Ascending aorta (tissue), 2 donors: ENCODE measurements at regions of chr3 and their contacts with region 1.

Region 1: DNA sequence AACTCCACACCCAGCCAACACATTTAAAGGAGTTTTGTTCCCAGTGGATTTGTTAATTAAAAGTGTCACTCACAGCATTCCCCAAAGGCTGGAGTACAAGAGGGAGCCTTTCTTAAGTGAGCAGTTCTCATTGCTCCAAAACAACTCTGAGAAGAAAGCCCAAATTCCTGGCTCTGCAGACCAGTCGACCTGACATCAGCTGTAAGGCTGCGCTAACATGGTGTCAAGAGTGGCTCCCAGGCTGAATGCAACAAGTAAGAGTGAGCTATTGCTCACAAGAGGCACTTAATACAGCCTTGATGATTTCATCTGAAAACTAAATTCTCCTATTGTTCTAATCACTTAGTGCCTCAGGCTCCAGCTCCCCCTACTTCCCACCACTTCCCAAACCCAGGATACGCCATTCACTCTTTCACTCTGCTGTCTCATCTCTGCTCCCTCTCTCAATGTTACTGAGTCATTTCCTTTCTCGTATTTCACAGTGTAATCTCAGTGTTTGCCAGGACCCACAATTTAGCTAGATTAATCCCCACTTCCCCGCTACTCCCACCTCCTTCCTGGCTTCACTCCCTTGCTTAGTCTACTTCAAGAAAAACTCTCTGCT is 81.8 kb downstream of the WWTR1 start:
- DNase-seq: peak in 1 of 2 donors; percentile 84
- H3K4me3 ChIP-seq: peak overlapping the region in 1 of 2 donors; percentile 35
- H3K27ac ChIP-seq: peak overlapping the region; percentile 93 to 94
- H3K4me1 ChIP-seq: peaks cover 16 to 83% of the 10 kb centered on the region in 2 donors
- H3K27me3 ChIP-seq: no peaks in the 10 kb centered on the region
- CTCF ChIP-seq: no peak

Region 2: DNA sequence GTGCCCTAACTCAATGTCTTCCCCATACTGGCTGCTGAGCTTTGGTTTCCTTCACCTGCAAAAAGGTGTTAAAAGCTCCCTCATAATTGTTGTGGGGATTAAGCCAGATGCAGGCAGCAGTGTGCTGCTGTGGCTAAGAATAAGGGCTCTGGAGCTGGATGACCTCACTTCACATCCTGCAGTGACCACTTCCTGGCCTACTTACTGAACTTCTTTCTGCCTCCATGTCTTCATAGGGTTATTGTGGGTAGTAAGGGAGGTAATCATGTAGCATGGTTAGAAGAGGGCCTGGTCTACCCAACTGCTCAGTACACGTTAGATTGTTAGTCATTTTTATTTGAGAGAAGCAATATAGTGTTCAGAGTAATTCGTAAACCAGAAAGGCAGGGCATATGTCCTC is 566.3 kb before region 1 on chr3:
- intact Hi-C with region 1: loop called (anchors 5 kb)
- DNase-seq: no peak
- H3K4me3 ChIP-seq: no peak overlapping the region
- H3K27ac ChIP-seq: peak overlapping the region; percentile 59 to 90
- H3K4me1 ChIP-seq: peaks cover 6 to 22% of the 10 kb centered on the region in 2 donors
- H3K27me3 ChIP-seq: no peaks in the 10 kb centered on the region
- CTCF ChIP-seq: no peak

Region 3: GRCh38 chr3:149534671-149535332 is 41.3 kb before region 1 on chr3:
- intact Hi-C with region 1: loop called (anchors 5 kb)
- DNase-seq: no peak
- H3K4me3 ChIP-seq: no peak overlapping the region
- H3K27ac ChIP-seq: peak overlapping the region; percentile 66 to 82
- H3K4me1 ChIP-seq: peaks cover 0 to 62% of the 10 kb centered on the region in 2 donors
- H3K27me3 ChIP-seq: no peaks in the 10 kb centered on the region
- CTCF ChIP-seq: no peak

Region 4: GRCh38 chr3:149547938-149548668 is 28.0 kb before region 1 on chr3:
- intact Hi-C with region 1: loop called (anchors 2 kb)
- DNase-seq: peak in 1 of 2 donors; percentile 82
- H3K4me3 ChIP-seq: peak overlapping the region; percentile 8 to 39
- H3K27ac ChIP-seq: peak overlapping the region; percentile 89 to 92
- H3K4me1 ChIP-seq: peaks cover 6 to 27% of the 10 kb centered on the region in 2 donors
- H3K27me3 ChIP-seq: no peaks in the 10 kb centered on the region
- CTCF ChIP-seq: no peak

Region 5: DNA sequence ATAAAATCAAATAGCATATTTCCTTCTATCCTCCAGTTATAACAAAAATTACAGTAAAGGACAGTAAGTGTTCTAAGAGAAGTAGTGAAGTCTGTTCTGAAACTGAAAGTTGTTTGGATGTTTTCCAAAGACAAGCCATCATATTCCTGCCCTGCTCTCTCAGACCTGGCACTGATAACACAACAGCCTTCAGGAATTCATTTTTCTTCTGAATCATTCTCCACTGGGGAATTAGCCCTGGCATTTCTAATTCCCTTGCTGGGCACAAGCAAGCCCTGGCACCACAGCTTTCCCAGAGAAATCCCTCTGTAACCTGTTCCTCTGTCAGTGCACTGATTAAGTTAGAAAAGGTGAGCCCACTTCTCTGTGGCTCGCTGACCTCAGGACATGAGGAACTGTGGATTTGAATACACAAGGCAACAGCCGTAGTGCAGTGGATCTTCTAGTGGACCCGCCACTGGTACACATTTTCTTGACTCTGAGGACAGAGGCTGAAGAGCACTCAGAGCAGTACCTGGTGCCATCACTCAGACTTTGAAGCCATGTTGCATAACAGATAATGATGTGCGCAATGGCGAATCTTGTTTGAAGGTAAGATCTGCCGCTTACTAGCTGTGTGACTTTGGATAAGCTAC is 20.2 kb after region 1 on chr3:
- intact Hi-C with region 1: loop called (anchors 2 kb)
- DNase-seq: no peak
- H3K4me3 ChIP-seq: peak overlapping the region in 1 of 2 donors; percentile 25
- H3K27ac ChIP-seq: peak overlapping the region; percentile 55 to 70
- H3K4me1 ChIP-seq: peaks cover 19 to 76% of the 10 kb centered on the region in 2 donors
- H3K27me3 ChIP-seq: no peaks in the 10 kb centered on the region
- CTCF ChIP-seq: no peak